ENCODE measurements at regions of chr1 and their contacts with region 1.

Region 1: GRCh38 chr1:67815303-67816094 is 17.8 kb downstream of the GNG12 start:
- DNase-seq: no peak
- H3K4me3 ChIP-seq: no peak overlapping the region
- CTCF ChIP-seq: no peak

Region 2: DNA sequence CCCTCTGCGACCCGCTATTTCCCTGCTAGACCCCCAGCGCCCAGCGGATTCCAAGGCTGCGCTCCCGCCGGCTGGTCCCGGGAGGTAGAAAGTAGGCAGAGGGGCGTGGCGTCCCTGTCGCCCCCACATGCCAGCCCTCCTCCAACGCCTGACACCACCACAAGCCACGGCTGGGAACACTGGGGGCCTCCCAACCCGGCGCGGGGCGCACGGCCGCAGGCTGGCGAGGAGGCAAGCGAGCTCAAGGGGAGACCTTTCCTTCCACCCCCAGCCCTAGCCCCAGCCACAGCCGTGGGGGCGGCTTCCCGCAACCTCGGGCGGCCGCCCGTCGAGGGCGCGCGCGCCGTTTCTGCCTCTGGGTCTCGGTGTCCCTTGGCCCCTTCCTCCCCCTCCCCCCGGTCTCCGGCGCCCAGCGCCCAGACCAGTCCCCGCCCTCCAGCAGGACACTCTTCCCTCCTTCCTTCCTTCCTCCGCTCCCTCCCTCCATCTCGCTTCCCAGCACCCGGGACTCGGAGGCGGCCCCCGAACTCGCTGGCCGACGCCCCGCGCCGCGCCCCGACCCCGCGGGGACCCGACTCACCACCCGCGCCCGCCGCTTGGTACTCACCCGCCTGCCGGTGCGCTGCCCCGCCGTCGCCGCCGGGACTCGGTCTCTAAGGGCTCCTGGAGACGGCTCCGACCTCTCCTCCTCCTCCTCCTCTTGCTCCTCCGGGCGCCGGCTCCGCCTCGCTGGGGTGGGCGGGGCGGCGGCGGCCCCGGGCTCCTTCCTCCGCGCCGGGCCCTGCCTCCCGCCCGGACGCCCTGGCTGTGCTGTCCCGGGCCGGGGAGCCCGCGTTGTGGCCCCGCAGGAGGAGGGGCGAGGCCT is 17.5 kb after region 1 on chr1 and contains the start of gene GNG12:
- CTCF ChIA-PET with region 1: interaction called, 30 read pairs
- POLR2A ChIA-PET with region 1: no interaction called
- DNase-seq: no peak
- H3K4me3 ChIP-seq: peak within 1 kb of the TSS; percentile 80
- CTCF ChIP-seq: no peak

Region 3: GRCh38 chr1:68016381-68016780 is 200.9 kb after region 1 on chr1:
- CTCF ChIA-PET with region 1: no interaction called
- POLR2A ChIA-PET with region 1: no interaction called
- DNase-seq: no peak
- H3K4me3 ChIP-seq: no peak overlapping the region
- CTCF ChIP-seq: no peak